ENCODE measurements at regions of chr5 and their contacts with region 1.

Region 1: GRCh38 chr5:38607396-38607795 is 51.0 kb upstream of the LIFR start:
- DNase-seq: no peak
- ATAC-seq: no peak

Region 2: GRCh38 chr5:38121420-38121819 is 486.0 kb before region 1 on chr5:
- intact Hi-C with region 1: no loop called
- DNase-seq: no peak
- ATAC-seq: no peak

Region 3: DNA sequence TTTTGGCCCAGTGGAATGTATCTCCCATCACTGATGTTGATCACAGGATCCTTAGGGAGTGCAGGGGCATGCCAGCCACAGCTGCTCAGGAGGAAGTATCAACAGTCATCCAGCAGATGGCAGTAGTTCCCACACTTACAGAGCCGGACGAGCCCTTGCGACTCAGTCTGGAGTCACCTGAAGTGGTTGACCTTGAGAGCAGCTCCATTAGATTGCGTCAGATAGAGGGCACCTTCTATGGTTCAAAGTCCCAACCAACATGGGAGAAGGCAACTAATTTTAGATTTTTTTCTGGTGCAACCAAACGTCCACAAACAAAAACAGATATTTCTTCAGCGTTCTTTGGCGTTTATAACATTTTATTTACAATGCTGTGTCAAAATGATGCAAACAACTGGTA is 224.5 kb before region 1 on chr5:
- intact Hi-C with region 1: no loop called
- DNase-seq: peak; percentile 63
- ATAC-seq: peak; percentile 91

Region 4: DNA sequence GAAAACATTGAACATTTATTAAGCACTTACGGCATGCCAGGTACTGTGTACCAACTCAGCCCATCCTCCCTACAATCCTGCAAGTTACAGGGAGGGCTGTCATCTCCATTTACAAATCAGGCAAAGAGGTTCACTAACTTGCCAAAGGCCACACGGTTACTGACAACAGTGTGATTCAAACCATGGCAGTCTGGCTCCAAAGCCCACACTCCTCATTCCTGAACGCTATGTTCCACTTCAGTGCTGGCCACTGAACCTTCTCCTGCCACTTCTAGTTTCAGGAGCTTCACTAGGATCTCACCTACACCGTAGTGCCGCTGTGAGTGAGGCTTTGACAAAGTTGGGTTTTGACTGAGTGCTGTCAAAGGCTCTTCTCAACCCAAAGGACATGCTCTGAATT is 43.8 kb before region 1 on chr5:
- intact Hi-C with region 1: no loop called
- DNase-seq: no peak
- ATAC-seq: peak; percentile 90

Region 5: DNA sequence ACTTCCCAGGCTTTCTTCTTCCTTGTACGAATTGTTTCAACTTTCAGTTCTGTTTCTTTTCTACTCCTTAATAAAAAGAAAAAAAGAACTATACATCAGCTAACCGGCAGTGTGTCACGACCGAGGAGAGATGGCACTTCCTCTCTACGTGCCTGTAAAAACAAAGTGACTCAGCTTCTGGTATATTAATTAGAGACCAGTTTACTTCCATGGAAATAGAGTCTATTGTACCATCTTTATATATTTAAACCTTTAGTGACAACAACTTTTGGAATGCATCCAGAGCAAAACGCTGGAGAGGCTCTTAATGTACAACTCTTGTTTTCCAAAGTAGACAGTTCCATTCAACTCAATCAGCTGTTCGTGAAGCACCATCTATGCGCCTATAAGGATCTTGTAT is 43.5 kb after region 1 on chr5:
- intact Hi-C with region 1: loop called (anchors 5 kb)
- DNase-seq: no peak
- ATAC-seq: no peak

Region 6: GRCh38 chr5:38899936-38900335 is 292.5 kb after region 1 on chr5:
- intact Hi-C with region 1: no loop called
- DNase-seq: no peak
- ATAC-seq: no peak

Measured in Right ventricle myocardium superior (tissue), 1 donor.